ENCODE measurements at regions of chr2 and their contacts with region 1.

Region 1: DNA sequence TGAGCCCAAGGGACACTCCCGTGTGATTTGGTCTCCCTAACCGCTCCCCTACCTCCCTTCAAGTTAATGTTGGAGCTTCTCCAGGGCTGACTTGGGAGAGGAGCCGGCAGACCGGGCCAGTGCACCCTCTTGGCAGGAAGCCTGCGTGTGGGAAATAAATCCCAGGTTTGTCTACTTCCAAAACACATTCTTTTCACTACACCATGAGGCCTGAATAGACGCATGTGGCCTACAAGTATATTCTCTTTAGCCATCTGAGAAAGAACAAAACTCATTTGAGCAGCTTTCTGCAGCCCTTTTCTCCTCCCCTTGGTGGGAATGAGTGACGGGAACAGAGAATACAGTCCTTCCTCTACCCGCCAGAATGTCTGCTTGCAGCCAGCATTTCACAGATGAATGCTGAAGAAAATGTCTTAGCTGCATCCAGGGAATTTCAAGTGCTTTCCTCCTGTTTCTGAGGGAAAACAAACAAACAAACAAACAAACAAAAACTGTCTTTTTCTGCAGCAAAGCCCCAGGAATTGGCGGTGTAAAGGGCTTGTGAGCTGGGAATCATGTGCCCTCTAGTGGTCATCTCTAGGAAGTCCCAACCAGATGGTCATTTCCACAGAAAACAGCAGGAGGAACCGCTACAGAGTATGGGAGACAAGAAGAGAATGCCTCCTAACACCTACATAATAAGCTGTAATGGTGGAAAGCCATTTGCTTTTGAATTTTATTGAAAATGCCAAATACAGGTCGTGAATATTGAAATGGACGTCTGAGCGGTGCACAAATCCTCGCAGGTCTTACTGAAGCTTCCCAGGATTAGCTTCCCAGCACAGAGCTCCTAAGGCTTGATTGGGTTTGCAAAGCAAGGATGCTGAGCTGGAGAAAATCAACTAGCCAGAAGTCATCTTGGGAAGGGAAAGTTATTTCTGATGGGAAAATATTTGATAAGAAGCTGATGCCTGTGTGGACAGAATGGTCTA is 41.2 kb upstream of the DAPL1 start:
- DNase-seq: no peak
- ATAC-seq: peak; percentile 74
- H3K4me3 Mint-ChIP-seq: no peak overlapping the region
- H3K27ac Mint-ChIP-seq: no peak overlapping the region
- H3K4me1 Mint-ChIP-seq: no peaks in the 10 kb centered on the region
- H3K27me3 Mint-ChIP-seq: peaks cover 10% of the 10 kb centered on the region
- CTCF ChIP-seq: no peak

Region 2: DNA sequence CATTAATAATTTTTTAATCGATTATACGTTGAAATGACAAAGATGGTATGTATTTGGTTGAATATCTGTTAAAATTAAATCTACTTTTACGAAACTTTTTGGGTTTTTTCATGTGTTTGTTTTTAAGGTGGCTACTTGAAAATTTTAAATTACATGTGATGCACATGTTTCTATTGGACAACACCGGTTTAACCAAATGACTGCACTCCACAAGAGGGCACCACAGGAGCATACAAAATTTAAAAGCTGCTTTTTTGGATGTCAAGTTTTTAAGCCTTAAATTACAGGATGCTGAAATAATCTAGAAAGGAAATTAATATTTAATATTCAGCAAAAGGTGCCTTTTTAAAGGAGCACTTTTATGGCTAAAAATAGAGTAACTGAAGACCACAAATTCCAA is 976.5 kb before region 1 on chr2:
- CTCF ChIA-PET with region 1: no interaction called
- POLR2A ChIA-PET with region 1: no interaction called
- intact Hi-C with region 1: loop called (anchors 1 kb)
- DNase-seq: no peak
- ATAC-seq: no peak
- H3K4me3 Mint-ChIP-seq: no peak overlapping the region
- H3K27ac Mint-ChIP-seq: no peak overlapping the region
- H3K4me1 Mint-ChIP-seq: no peaks in the 10 kb centered on the region
- H3K27me3 Mint-ChIP-seq: no peaks in the 10 kb centered on the region
- CTCF ChIP-seq: no peak

Region 3: GRCh38 chr2:158024288-158024898 is 729.5 kb before region 1 on chr2:
- CTCF ChIA-PET with region 1: interaction called, 86 read pairs
- POLR2A ChIA-PET with region 1: no interaction called
- intact Hi-C with region 1: loop called (anchors 1 kb)
- DNase-seq: no peak
- ATAC-seq: peak; percentile 54
- H3K4me3 Mint-ChIP-seq: no peak overlapping the region
- H3K27ac Mint-ChIP-seq: no peak overlapping the region
- H3K4me1 Mint-ChIP-seq: no peaks in the 10 kb centered on the region
- H3K27me3 Mint-ChIP-seq: no peaks in the 10 kb centered on the region
- CTCF ChIP-seq: peak; percentile 93

Region 4: GRCh38 chr2:158034199-158034866 is 719.6 kb before region 1 on chr2:
- CTCF ChIA-PET with region 1: interaction called, 18 read pairs
- POLR2A ChIA-PET with region 1: no interaction called
- intact Hi-C with region 1: loop called (anchors 1 kb)
- DNase-seq: no peak
- ATAC-seq: no peak
- H3K4me3 Mint-ChIP-seq: no peak overlapping the region
- H3K27ac Mint-ChIP-seq: no peak overlapping the region
- H3K4me1 Mint-ChIP-seq: no peaks in the 10 kb centered on the region
- H3K27me3 Mint-ChIP-seq: peaks cover 3% of the 10 kb centered on the region
- CTCF ChIP-seq: no peak

Region 5: GRCh38 chr2:158179660-158180059 is 574.3 kb before region 1 on chr2:
- CTCF ChIA-PET with region 1: interaction called, 58 read pairs
- POLR2A ChIA-PET with region 1: interaction called, 3 read pairs
- intact Hi-C with region 1: loop called (anchors 1 kb)
- DNase-seq: no peak
- ATAC-seq: no peak
- H3K4me3 Mint-ChIP-seq: no peak overlapping the region
- H3K27ac Mint-ChIP-seq: no peak overlapping the region
- H3K4me1 Mint-ChIP-seq: peaks cover 2% of the 10 kb centered on the region
- H3K27me3 Mint-ChIP-seq: peaks cover 16% of the 10 kb centered on the region
- CTCF ChIP-seq: no peak

Region 6: GRCh38 chr2:158676696-158677095 is 77.2 kb before region 1 on chr2:
- CTCF ChIA-PET with region 1: no interaction called
- POLR2A ChIA-PET with region 1: no interaction called
- intact Hi-C with region 1: no loop called
- DNase-seq: no peak
- ATAC-seq: no peak
- H3K4me3 Mint-ChIP-seq: no peak overlapping the region
- H3K27ac Mint-ChIP-seq: no peak overlapping the region
- H3K4me1 Mint-ChIP-seq: no peaks in the 10 kb centered on the region
- H3K27me3 Mint-ChIP-seq: no peaks in the 10 kb centered on the region
- CTCF ChIP-seq: no peak

Measured in activated B cell treated with CpG ODN at 0.5 μM for 24 hours (primary cell).